Activated CD4-positive, alpha-beta T cell treated with anti-CD3 and anti-CD28 coated beads for 36 hours (primary cell): ENCODE measurements at regions of chr17 and their contacts with region 1.

Region 1: GRCh38 chr17:31216053-31216751 is 80.8 kb downstream of the OMG start:
- DNase-seq: no peak
- ATAC-seq: no peak
- H3K4me3 Mint-ChIP-seq: no peak overlapping the region
- H3K27ac Mint-ChIP-seq: no peak overlapping the region
- H3K4me1 Mint-ChIP-seq: no peaks in the 10 kb centered on the region
- H3K27me3 Mint-ChIP-seq: no peaks in the 10 kb centered on the region

Region 2: DNA sequence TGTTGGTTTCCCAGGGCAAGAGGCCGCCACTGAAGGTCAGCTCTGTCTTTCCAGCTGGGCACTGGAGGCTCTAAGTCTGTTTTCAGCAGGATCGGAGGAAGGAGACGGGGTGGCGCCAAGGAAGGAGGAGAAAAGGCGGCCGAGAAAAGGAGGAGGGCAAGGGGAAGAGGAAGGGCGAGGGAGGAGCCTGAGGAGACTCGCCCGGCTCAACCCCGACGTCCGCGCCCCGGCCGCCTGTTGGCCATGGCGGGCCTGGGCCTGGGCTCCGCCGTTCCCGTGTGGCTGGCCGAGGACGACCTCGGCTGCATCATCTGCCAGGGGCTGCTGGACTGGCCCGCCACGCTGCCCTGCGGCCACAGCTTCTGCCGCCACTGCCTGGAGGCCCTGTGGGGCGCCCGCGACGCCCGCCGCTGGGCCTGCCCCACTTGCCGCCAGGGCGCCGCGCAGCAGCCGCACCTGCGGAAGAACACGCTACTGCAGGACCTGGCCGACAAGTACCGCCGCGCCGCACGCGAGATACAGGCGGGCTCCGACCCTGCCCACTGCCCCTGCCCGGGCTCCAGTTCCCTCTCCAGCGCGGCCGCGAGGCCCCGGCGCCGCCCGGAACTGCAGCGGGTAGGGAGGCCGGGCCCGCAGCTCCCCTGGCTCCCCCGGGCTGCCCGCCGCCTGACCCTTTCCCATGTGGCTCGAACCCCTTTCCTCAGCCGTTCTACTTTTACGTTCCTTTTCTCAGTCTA is 245.2 kb before region 1 on chr17 and contains the start of gene RNF135:
- CTCF ChIA-PET with region 1: interaction called, 16 read pairs
- POLR2A ChIA-PET with region 1: no interaction called
- intact Hi-C with region 1: loop called in 1 of 2 experiments (anchors 1 kb)
- DNase-seq: peak; percentile 76
- ATAC-seq: peak; percentile 73
- H3K4me3 Mint-ChIP-seq: peak within 1 kb of the TSS; percentile 93
- H3K27ac Mint-ChIP-seq: peak within 1 kb of the TSS; percentile 95
- H3K4me1 Mint-ChIP-seq: peaks cover 36% of the 10 kb centered on the region
- H3K27me3 Mint-ChIP-seq: peaks cover 9% of the 10 kb centered on the region
- total RNA-seq, gene RNF135: 5.8 to 6.0 TPM

Region 3: DNA sequence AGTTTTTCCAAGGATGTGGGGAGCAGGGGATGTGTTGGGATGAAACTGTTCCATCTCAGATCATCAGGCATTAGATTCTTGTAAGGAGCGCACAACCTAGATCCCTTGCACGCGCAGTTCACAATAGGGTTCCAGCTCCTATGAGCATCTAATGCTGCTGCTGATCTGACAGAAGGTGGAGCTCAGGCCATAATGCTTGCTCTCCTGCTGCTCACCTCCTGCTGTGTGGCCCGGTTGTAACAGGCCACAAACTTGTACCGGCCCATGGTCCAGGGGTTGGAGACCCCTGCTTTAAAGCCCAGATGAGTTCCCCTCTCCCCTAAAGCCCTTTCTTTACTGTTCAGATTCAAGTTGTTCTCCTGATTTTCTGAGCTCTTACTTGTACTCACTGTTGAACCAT is 200.6 kb before region 1 on chr17:
- CTCF ChIA-PET with region 1: interaction called, 3 read pairs
- POLR2A ChIA-PET with region 1: no interaction called
- intact Hi-C with region 1: loop called (anchors 1 to 5 kb)
- DNase-seq: no peak
- ATAC-seq: no peak
- H3K4me3 Mint-ChIP-seq: no peak overlapping the region
- H3K27ac Mint-ChIP-seq: no peak overlapping the region
- H3K4me1 Mint-ChIP-seq: peaks cover 4% of the 10 kb centered on the region
- H3K27me3 Mint-ChIP-seq: peaks cover 2% of the 10 kb centered on the region

Region 4: DNA sequence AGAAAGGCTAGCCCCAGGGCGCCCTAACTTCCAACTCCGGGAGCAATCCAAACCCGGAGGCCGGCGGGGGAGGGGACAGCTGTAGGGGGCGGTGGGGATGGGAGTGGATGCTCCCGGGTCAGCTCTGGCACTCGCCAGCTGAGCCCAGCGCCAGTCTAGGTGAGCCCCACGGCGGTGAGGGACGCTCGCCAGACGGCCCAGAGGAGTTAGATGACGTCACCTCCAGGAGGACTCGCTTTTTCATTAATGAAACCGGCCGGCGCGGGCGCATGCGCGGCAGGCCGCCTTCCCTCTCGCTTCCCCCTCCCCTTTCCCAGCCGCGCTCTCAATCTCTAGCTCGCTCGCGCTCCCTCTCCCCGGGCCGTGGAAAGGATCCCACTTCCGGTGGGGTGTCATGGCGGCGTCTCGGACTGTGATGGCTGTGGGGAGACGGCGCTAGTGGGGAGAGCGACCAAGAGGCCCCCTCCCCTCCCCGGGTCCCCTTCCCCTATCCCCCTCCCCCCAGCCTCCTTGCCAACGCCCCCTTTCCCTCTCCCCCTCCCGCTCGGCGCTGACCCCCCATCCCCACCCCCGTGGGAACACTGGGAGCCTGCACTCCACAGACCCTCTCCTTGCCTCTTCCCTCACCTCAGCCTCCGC is 121.5 kb before region 1 on chr17 and contains the start of gene NF1:
- CTCF ChIA-PET with region 1: interaction called, 3 read pairs
- POLR2A ChIA-PET with region 1: no interaction called
- intact Hi-C with region 1: loop called in 1 of 2 experiments (anchors 1 kb)
- DNase-seq: peak; percentile 94
- ATAC-seq: peak; percentile 89
- H3K4me3 Mint-ChIP-seq: peak within 1 kb of the TSS; percentile 94
- H3K27ac Mint-ChIP-seq: peak within 1 kb of the TSS; percentile 94
- H3K4me1 Mint-ChIP-seq: peaks cover 11% of the 10 kb centered on the region
- H3K27me3 Mint-ChIP-seq: no peaks in the 10 kb centered on the region
- total RNA-seq, gene NF1: 22.1 to 26.2 TPM

Region 5: GRCh38 chr17:31373150-31374093 is 157.2 kb after region 1 on chr17:
- CTCF ChIA-PET with region 1: interaction called, 17 read pairs
- POLR2A ChIA-PET with region 1: no interaction called
- intact Hi-C with region 1: loop called in 1 of 2 experiments (anchors 1 kb)
- DNase-seq: peak; percentile 27
- ATAC-seq: peak; percentile 85
- H3K4me3 Mint-ChIP-seq: no peak overlapping the region
- H3K27ac Mint-ChIP-seq: no peak overlapping the region
- H3K4me1 Mint-ChIP-seq: peaks cover 22% of the 10 kb centered on the region
- H3K27me3 Mint-ChIP-seq: no peaks in the 10 kb centered on the region